CD4-positive, alpha-beta memory T cell (primary cell): ENCODE measurements at regions of chr11 and their contacts with region 1.

Region 1: DNA sequence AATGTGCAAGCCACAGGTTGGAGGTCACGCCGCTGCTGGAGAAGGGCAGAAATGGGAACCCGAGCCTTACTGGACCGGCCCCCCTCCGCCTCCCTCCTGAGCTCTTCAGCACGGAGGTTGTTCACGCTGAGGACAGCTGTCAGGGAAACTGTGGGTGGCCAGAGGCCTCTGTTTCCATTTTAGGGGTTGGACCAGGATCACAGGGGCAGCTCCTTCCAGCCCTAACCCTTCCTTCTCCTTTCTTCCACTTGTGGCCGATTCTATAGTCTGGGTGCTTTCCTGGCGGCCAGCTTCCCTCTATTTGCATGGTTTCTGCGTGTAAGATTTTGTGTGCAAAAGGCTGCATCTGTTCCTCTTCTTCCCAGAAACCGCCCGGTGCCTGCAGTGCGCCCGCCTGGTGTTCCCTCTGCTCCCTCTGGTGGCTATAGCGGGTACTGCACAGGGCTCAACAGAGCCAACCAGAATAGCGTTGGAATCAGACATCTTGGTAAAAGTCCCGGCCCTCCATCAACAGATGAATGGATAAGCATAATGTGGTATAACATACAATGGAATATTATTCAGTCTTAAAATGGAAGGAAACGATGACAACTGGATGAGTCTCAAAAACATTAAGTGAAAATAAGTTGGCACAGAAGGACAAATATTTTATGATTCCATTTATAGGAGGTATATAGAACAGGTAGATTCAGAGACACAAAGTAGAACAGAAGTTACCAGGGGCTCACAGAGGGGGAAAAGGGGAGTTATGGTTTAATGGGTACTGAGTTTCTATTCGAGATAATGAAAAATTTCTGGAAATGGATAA is 8.4 kb upstream of the SLC22A8 start:
- DNase-seq: peak; percentile 68 to 76 (median 72)
- H3K4me3 ChIP-seq: no peak overlapping the region
- H3K4me3 Mint-ChIP-seq: peak overlapping the region in 2 of 8 donors; percentile 1 to 20
- H3K27ac ChIP-seq: no peak overlapping the region
- H3K27ac Mint-ChIP-seq: no peak overlapping the region
- H3K4me1 ChIP-seq: no peaks in the 10 kb centered on the region
- H3K4me1 Mint-ChIP-seq: peaks cover 0 to 4% (median 2%) of the 10 kb centered on the region in 4 donors
- H3K27me3 ChIP-seq: no peaks in the 10 kb centered on the region
- H3K27me3 Mint-ChIP-seq: peaks cover 8 to 25% of the 10 kb centered on the region in 2 donors

Region 2: DNA sequence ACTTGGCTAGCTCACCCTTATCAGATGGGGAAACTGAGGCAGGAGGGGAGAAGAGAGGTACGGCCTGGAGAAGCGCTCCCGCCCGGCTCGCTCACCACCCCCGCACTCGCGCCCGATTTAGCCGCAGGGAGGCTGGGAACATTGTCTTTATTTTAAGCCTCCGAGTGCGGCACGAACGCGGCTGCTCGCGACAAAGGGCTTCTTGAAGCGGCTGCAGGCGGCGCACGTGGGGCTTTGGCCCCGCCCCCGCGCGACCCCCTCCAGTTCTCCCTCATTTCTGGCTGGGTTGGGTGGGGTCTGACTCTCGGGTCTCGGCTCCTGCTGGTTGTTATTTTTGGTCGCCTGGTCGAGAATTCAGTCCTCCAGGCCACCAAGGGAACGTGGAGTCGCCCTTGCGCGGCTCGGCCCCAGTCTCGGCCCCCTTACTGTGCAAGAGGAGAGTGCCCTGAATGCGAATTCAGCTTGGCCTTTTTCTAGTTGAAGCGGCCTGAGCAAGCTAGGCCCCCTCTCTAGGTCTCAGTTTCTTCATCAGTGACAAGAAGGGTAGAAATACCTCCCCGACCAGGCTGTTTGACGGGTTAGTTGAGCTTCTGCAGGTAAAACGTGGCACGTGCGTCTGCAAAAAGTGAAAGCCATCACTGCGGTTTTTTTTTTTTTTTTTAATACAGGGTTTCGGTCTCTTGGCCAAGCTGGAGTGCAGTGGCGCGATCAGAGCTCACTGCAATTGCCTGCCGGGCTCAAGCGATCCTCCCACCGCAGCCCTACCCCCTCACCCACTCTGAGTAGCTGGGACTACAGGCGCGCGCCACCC is 100.2 kb before region 1 on chr11:
- CTCF ChIA-PET with region 1: no interaction called
- POLR2A ChIA-PET with region 1: no interaction called
- intact Hi-C with region 1: no loop called
- DNase-seq: peak; percentile 39 to 63 (median 42)
- H3K4me3 ChIP-seq: peak overlapping the region; percentile 6 to 23
- H3K4me3 Mint-ChIP-seq: peak overlapping the region; percentile 72 to 83 (median 76)
- H3K27ac ChIP-seq: no peak overlapping the region
- H3K27ac Mint-ChIP-seq: peak overlapping the region in 4 of 7 donors; percentile 29 to 84 (median 64)
- H3K4me1 ChIP-seq: peaks cover 38% of the 10 kb centered on the region
- H3K4me1 Mint-ChIP-seq: peaks cover 11 to 45% (median 24%) of the 10 kb centered on the region in 4 donors
- H3K27me3 ChIP-seq: peaks cover 21% of the 10 kb centered on the region
- H3K27me3 Mint-ChIP-seq: peaks cover 46 to 63% of the 10 kb centered on the region in 2 donors

Region 3: GRCh38 chr11:63007920-63008319 is 16.1 kb before region 1 on chr11:
- CTCF ChIA-PET with region 1: interaction called, 15 read pairs
- POLR2A ChIA-PET with region 1: no interaction called
- intact Hi-C with region 1: no loop called
- DNase-seq: no peak
- H3K4me3 ChIP-seq: no peak overlapping the region
- H3K4me3 Mint-ChIP-seq: no peak overlapping the region
- H3K27ac ChIP-seq: no peak overlapping the region
- H3K27ac Mint-ChIP-seq: peak overlapping the region in 1 of 7 donors; percentile 10
- H3K4me1 ChIP-seq: no peaks in the 10 kb centered on the region
- H3K4me1 Mint-ChIP-seq: no peaks in the 10 kb centered on the region
- H3K27me3 ChIP-seq: no peaks in the 10 kb centered on the region
- H3K27me3 Mint-ChIP-seq: peaks cover 0 to 2% of the 10 kb centered on the region in 2 donors

Region 4: GRCh38 chr11:63380130-63380529 is 356.1 kb after region 1 on chr11:
- CTCF ChIA-PET with region 1: no interaction called
- POLR2A ChIA-PET with region 1: no interaction called
- intact Hi-C with region 1: no loop called
- DNase-seq: no peak
- H3K4me3 ChIP-seq: no peak overlapping the region
- H3K4me3 Mint-ChIP-seq: no peak overlapping the region
- H3K27ac ChIP-seq: no peak overlapping the region
- H3K27ac Mint-ChIP-seq: no peak overlapping the region
- H3K4me1 ChIP-seq: no peaks in the 10 kb centered on the region
- H3K4me1 Mint-ChIP-seq: no peaks in the 10 kb centered on the region
- H3K27me3 ChIP-seq: no peaks in the 10 kb centered on the region
- H3K27me3 Mint-ChIP-seq: peaks cover 9 to 15% of the 10 kb centered on the region in 2 donors